Activated CD4-positive, alpha-beta memory T cell treated with anti-CD3 and anti-CD28 coated beads for 36 hours (primary cell): ENCODE measurements at regions of chr1 and their contacts with region 1.

Region 1: GRCh38 chr1:206583707-206584648 is 28.3 kb downstream of the EIF2D start:
- DNase-seq: peak; percentile 91
- H3K4me3 Mint-ChIP-seq: peak overlapping the region; percentile 73
- H3K27ac Mint-ChIP-seq: peak overlapping the region; percentile 99
- H3K4me1 Mint-ChIP-seq: peaks cover 94% of the 10 kb centered on the region
- H3K27me3 Mint-ChIP-seq: no peaks in the 10 kb centered on the region

Region 2: GRCh38 chr1:206461602-206462455 is 122.1 kb before region 1 on chr1:
- CTCF ChIA-PET with region 1: interaction called, 13 read pairs
- POLR2A ChIA-PET with region 1: interaction called, 3 read pairs
- intact Hi-C with region 1: loop called (anchors 2 kb)
- DNase-seq: peak; percentile 81
- H3K4me3 Mint-ChIP-seq: no peak overlapping the region
- H3K27ac Mint-ChIP-seq: no peak overlapping the region
- H3K4me1 Mint-ChIP-seq: peaks cover 52% of the 10 kb centered on the region
- H3K27me3 Mint-ChIP-seq: no peaks in the 10 kb centered on the region

Region 3: DNA sequence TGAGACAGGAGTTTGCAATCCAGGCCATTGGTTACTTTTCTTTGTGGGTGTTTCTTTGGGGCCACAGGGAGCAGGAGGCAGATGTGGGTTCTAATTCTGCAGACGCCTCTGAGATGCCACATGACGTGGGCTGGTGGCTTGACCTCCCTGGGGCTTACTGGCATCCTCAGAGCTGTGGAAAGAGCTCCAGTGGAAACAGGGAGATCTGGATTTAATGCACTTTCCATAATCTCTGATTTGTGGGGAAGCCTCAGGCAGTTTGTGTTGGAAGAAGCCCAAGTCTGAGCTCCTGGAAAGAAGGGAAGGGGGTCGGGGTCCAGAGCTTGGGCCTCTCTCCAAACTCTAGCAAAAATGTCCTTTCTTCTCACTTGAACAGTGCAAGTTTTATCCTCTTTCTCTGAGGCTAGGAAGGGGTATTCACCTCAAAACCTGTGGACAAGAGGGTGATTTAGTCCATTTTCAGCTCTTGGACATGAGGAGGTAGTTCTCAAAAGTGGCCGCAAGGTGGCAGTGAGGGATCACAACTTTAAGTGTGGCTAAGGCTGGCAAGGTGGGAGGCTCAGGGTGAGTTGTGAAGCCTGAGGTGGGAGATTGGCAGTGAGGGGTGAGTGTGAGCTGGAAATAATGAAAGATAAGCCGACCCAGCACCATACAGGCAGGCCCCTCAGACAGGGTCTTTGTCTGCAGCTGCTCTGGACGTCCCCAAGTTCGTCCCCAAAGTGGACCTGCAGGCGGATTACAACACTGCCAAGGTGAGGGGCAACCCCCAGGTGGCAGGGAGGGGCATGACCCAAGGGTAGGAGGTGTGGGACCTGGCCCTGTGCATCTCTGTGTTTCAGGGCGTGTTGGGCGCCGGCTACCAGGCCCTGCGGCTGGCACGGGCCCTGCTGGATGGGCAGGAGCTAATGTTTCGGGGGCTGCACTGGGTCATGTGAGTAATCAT is 104.5 kb before region 1 on chr1:
- CTCF ChIA-PET with region 1: interaction called, 42 read pairs
- POLR2A ChIA-PET with region 1: no interaction called
- intact Hi-C with region 1: loop called (anchors 5 kb)
- DNase-seq: peak; percentile 79
- H3K4me3 Mint-ChIP-seq: no peak overlapping the region
- H3K27ac Mint-ChIP-seq: peak overlapping the region; percentile 26
- H3K4me1 Mint-ChIP-seq: peaks cover 37% of the 10 kb centered on the region
- H3K27me3 Mint-ChIP-seq: no peaks in the 10 kb centered on the region

Region 4: DNA sequence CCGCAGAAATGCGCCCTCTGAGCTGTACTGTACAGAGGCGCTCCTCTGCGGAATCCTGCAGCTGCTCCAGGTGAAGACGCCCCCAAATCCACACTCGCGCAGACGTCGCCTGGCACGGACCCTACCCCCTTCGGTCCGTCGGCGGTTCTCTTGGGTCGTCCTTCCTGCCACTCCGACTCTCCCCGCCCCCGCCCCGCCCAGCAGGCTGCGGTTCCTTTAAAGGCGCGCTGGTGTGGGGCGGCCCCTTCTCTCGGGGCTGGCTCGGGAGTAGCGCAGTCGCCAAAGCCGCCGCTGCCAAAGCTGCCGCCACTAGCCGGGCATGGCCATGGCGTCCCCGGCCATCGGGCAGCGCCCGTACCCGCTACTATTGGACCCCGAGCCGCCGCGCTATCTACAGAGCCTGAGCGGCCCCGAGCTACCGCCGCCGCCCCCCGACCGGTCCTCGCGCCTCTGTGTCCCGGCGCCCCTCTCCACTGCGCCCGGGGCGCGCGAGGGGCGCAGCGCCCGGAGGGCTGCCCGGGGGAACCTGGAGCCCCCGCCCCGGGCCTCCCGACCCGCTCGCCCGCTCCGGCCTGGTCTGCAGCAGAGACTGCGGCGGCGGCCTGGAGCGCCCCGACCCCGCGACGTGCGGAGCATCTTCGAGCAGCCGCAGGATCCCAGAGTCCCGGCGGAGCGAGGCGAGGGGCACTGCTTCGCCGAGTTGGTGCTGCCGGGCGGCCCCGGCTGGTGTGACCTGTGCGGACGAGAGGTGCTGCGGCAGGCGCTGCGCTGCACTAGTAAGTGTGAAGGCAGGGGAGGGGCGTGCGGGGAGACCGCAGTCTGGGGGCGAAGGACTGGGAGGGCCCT is 76.5 kb before region 1 on chr1 and contains the start of gene RASSF5:
- CTCF ChIA-PET with region 1: interaction called, 12 read pairs
- POLR2A ChIA-PET with region 1: interaction called, 3 read pairs
- intact Hi-C with region 1: loop called (anchors 1 kb)
- DNase-seq: peak; percentile 90
- H3K4me3 Mint-ChIP-seq: peak within 1 kb of the TSS; percentile 71
- H3K27ac Mint-ChIP-seq: peak within 1 kb of the TSS; percentile 30
- H3K4me1 Mint-ChIP-seq: peaks cover 47% of the 10 kb centered on the region
- H3K27me3 Mint-ChIP-seq: peaks cover 26% of the 10 kb centered on the region
- total RNA-seq, gene RASSF5: 203 TPM

Region 5: DNA sequence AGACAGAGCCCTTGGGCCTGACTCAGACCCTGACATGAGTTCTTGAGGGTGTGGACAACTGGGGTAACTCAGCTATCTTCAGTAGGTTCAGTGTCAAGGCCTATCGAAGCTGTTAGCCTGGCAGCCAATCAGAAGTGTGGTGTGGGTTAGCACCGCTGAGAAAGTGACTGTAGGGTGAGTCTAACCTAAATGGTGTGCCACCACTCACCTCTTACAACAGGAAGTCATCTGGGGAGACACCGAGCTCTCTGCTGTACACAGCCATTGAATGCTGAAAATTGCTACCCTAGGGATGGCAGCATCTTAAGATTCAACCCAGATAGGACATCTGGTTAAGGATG is 32.0 kb before region 1 on chr1:
- CTCF ChIA-PET with region 1: interaction called, 588 read pairs
- POLR2A ChIA-PET with region 1: interaction called, 546 read pairs
- intact Hi-C with region 1: loop called (anchors 1 kb)
- DNase-seq: peak; percentile 92
- H3K4me3 Mint-ChIP-seq: peak overlapping the region; percentile 70
- H3K27ac Mint-ChIP-seq: peak overlapping the region; percentile 91
- H3K4me1 Mint-ChIP-seq: peaks cover 53% of the 10 kb centered on the region
- H3K27me3 Mint-ChIP-seq: no peaks in the 10 kb centered on the region

Region 6: GRCh38 chr1:206563367-206564207 is 20.4 kb before region 1 on chr1:
- CTCF ChIA-PET with region 1: interaction called, 588 read pairs
- POLR2A ChIA-PET with region 1: interaction called, 546 read pairs
- intact Hi-C with region 1: loop called (anchors 1 kb)
- DNase-seq: no peak
- H3K4me3 Mint-ChIP-seq: peak overlapping the region; percentile 72
- H3K27ac Mint-ChIP-seq: peak overlapping the region; percentile 99
- H3K4me1 Mint-ChIP-seq: peaks cover 86% of the 10 kb centered on the region
- H3K27me3 Mint-ChIP-seq: no peaks in the 10 kb centered on the region

Region 7: GRCh38 chr1:206738370-206739366 is 154.7 kb after region 1 on chr1:
- CTCF ChIA-PET with region 1: no interaction called
- POLR2A ChIA-PET with region 1: no interaction called
- intact Hi-C with region 1: no loop called
- DNase-seq: no peak
- H3K4me3 Mint-ChIP-seq: no peak overlapping the region
- H3K27ac Mint-ChIP-seq: peak overlapping the region; percentile 64
- H3K4me1 Mint-ChIP-seq: peaks cover 93% of the 10 kb centered on the region
- H3K27me3 Mint-ChIP-seq: no peaks in the 10 kb centered on the region